ENCODE measurements at regions of chr9 and their contacts with region 1.

Region 1: GRCh38 chr9:95510709-95511615 is 5.8 kb downstream of the PTCH1 start:
- DNase-seq: peak; percentile 70 to 96
- H3K4me3 ChIP-seq: peak overlapping the region; percentile 85 to 86
- H3K27ac ChIP-seq: peak overlapping the region; percentile 78 to 87
- H3K4me1 ChIP-seq: peaks cover 6 to 13% of the 10 kb centered on the region in 2 donors
- H3K27me3 ChIP-seq: no peaks in the 10 kb centered on the region
- CTCF ChIP-seq: no peak

Region 2: DNA sequence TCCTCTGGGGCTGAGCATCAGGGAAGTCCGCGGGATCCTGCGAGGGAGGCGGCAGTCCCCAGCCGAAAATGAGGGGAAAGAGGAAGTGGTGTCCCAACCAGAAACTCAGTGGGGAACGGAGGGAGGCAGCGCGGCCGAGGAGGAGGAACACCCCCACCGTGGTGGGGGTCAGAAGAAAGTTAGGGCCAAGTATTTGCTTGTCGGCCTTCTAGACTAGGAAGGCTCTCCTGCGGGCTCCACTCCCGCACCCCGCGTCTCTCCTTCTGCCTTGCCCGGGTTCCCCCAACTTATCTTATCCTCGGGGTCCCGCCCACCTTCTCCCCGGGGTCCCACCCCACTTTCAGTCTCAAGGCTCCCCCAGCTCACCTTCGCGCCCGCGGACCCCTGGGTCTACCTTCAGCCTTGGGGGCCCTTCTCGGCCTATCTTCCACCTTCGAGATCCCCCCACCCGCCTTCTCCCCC is 1935.1 kb before region 1 on chr9:
- intact Hi-C with region 1: loop called (anchors 10 kb)
- DNase-seq: no peak
- H3K4me3 ChIP-seq: peak overlapping the region; percentile 81 to 98
- H3K27ac ChIP-seq: peak overlapping the region; percentile 95 to 97
- H3K4me1 ChIP-seq: peaks cover 6 to 31% of the 10 kb centered on the region in 2 donors
- H3K27me3 ChIP-seq: no peaks in the 10 kb centered on the region
- CTCF ChIP-seq: no peak

Region 3: DNA sequence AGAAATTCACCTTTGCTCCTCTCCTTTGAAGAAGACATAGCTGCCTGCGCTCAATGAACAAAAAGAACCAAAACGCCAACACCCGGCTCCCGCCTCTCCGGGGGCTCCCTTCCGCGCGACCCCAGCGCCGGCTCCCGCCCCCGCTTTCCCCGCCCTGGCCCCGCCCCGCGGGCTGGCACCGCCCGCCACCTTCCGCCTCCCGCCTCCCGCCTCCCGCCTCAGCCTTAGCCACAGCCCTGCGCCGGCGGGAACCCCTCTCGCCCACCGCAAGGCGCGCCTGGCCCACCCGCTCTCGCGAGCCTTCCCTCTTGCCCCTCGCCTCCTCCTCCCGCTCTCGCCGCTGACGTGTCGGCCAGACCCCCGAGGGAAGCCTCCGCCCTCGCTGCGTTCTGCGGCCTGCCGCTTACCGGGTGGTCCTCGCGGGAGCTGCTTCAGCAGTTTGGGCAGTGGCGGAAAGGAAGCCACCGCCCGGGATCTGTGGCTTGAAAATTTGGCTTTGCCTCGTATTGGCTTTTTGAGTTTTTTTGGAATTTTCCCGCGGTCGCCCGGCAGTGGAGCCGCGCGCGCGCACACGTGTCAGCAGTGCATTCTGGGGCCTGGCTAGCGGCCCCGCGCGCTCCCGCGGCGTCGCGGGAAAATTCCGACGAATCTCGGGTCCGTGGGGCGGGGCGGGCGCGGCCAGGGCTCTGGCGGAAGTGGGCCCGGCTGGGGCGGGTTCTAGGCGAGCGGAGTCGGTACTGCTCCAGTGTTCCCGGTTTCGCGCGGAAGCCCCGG is 193.7 kb before region 1 on chr9 and contains the start of gene FANCC:
- intact Hi-C with region 1: loop called (anchors 2 kb)
- DNase-seq: peak; percentile 50 to 96
- H3K4me3 ChIP-seq: peak within 1 kb of the TSS; percentile 85 to 99
- H3K27ac ChIP-seq: peak within 1 kb of the TSS; percentile 88 to 91
- H3K4me1 ChIP-seq: no peaks in the 10 kb centered on the region
- H3K27me3 ChIP-seq: no peaks in the 10 kb centered on the region
- CTCF ChIP-seq: peak in 1 of 3 experiments; percentile 3
- total RNA-seq, gene FANCC: 0.64 TPM

Region 4: DNA sequence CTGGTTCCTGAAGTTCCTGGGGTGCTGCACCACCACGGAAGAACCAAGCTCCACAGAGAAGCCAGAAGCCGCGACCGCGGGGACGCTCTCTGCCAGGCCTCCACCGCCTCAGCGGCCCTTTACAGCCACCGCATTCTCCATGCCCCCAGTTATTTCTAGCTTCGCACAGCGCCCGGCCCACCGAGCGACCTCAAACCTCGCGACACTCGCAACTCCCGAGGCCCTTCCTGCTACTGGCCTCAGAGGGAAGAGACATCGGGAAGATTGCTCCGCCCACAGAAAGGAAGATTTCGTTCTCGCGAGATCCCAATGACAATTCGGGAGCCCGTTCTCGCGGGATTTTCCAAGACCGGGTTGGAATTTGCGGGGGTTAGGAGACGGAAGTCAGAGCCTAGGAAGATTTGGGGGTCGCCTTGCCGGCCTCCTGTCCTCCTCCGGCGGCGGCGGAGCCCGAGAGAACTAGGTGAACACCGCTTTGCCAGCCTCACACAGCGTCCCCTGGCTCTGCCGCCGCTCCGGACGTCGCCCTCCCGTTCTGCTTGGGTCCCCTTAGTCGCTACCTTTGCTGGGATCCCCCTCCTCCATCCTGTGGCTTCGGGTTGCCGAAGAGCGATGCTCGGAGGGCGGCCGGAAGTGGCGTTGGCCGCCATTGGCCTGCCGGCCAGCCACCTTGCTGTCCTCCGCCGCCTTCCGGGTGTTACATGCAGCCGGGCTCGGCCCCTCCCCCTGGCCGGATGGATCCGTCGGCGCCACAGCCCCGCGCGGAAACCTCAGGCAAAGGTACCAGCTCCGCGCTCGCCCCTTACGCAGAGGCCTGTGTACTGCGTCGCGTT is 364.6 kb after region 1 on chr9 and contains the start of gene ERCC6L2:
- intact Hi-C with region 1: loop called (anchors 1 kb)
- DNase-seq: peak; percentile 89 to 98
- H3K4me3 ChIP-seq: no peak within 1 kb of the TSS
- H3K27ac ChIP-seq: no peak within 1 kb of the TSS
- H3K4me1 ChIP-seq: peaks cover 3% of the 10 kb centered on the region in 2 donors
- H3K27me3 ChIP-seq: no peaks in the 10 kb centered on the region
- CTCF ChIP-seq: no peak
- total RNA-seq, gene ERCC6L2: 22.9 TPM

Region 5: GRCh38 chr9:96418074-96418809 is 907.3 kb after region 1 on chr9 and contains the start of gene ZNF367:
- intact Hi-C with region 1: loop called (anchors 2 kb)
- DNase-seq: peak; percentile 96 to 99
- H3K4me3 ChIP-seq: peak within 1 kb of the TSS; percentile 77 to 92
- H3K27ac ChIP-seq: peak within 1 kb of the TSS; percentile 99
- H3K4me1 ChIP-seq: peaks cover 11 to 23% of the 10 kb centered on the region in 2 donors
- H3K27me3 ChIP-seq: no peaks in the 10 kb centered on the region
- CTCF ChIP-seq: no peak
- total RNA-seq, gene ZNF367: 3.9 TPM

Region 6: GRCh38 chr9:96619491-96620154 is 1108.7 kb after region 1 on chr9 and contains the start of gene CDC14B:
- intact Hi-C with region 1: loop called (anchors 5 kb)
- DNase-seq: peak; percentile 77 to 95
- H3K4me3 ChIP-seq: peak within 1 kb of the TSS; percentile 98
- H3K27ac ChIP-seq: peak within 1 kb of the TSS; percentile 91 to 93
- H3K4me1 ChIP-seq: no peaks in the 10 kb centered on the region
- H3K27me3 ChIP-seq: no peaks in the 10 kb centered on the region
- CTCF ChIP-seq: peak in 1 of 3 experiments; percentile 37
- total RNA-seq, gene CDC14B: 47.8 TPM

Measured in ascending aorta (tissue), 2 donors.